Endothelial cell of umbilical vein (primary cell): ENCODE measurements at regions of chr12 and their contacts with region 1.

Region 1: DNA sequence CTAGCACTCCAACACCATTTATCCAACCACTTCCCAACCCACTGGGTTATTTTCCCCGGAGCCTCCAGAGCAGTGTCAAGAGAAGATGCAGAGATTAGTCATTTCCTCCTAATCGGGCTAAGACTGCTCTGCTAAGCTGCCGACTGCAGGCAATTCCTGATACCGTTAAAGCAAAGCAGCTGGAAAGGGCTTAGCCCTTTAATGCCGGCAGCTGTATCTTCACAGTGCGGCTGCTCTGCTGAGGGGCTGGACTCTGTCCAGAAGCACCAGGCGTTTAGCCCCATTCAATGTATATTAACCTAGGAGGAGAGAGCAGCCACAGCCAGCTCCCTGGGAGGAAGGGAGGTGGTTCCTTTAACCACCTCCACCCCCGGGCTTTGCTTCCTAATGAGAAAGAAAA is 11.1 kb downstream of the AQP6 start:
- DNase-seq: peak; percentile 87
- H3K4me3 ChIP-seq: no peak overlapping the region
- H3K27ac ChIP-seq: peak overlapping the region; percentile 24
- H3K4me1 ChIP-seq: peaks cover 14% of the 10 kb centered on the region
- H3K27me3 ChIP-seq: no peaks in the 10 kb centered on the region
- CTCF ChIP-seq: no peak
- POLR2A ChIP-seq: no peak

Region 2: DNA sequence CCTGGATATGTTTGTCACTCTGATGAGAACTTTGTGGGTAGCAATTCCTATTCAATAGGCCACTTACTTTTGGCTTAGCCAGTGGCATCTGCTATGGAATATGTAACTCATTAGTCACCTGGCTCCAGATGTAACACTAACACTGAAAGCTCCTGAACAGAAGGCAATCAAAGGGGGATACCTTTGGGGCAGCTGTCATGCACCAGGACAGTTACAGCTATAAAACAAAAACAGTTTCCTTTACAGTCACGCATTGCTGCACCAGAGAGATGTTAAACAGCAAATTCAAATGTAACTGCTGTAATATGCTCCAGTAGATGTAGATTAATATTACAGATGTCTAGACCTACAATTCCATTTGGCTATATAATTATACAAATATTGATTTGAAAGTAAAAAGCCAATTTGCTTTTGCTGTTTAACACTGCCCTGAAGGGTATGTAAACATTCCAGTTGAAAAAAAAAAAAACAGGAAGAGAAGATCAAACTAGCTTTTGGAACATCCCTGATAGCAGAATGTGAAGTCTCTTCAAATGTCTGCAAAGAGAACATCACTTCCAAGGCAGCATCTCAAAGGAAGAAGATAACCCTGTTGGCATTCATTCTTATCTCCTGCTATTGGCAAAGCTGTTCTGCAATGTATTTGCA is 23.0 kb after region 1 on chr12:
- CTCF ChIA-PET with region 1: interaction called, 12 read pairs
- POLR2A ChIA-PET with region 1: interaction called, 4 read pairs
- dilution Hi-C with region 1: no loop called
- intact Hi-C with region 1: no loop called
- DNase-seq: no peak
- H3K4me3 ChIP-seq: no peak overlapping the region
- H3K27ac ChIP-seq: no peak overlapping the region
- H3K4me1 ChIP-seq: peaks cover 3% of the 10 kb centered on the region
- H3K27me3 ChIP-seq: no peaks in the 10 kb centered on the region
- CTCF ChIP-seq: no peak
- POLR2A ChIP-seq: no peak

Region 3: DNA sequence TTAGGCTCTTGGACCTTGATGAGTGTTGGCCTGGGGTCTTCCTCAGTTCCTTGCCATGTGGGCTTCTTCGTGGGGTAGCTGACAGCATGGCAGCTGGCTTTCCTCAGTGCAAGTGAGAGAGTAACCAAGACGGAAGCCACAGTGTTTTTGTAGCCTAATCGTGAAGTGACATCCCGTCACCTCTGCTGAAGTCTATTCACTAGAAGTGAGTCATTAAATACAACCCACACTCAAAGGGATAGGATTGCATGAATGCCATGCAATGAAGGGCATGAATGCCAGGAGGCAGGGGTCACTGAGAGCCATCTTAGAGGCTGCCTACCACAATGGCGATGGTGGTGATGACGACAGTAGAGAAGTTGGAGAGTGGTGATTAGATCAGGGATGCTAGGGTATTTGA is 60.0 kb after region 1 on chr12:
- CTCF ChIA-PET with region 1: interaction called, 55 read pairs
- POLR2A ChIA-PET with region 1: no interaction called
- dilution Hi-C with region 1: no loop called
- intact Hi-C with region 1: no loop called
- DNase-seq: no peak
- H3K4me3 ChIP-seq: no peak overlapping the region
- H3K27ac ChIP-seq: no peak overlapping the region
- H3K4me1 ChIP-seq: no peaks in the 10 kb centered on the region
- H3K27me3 ChIP-seq: peaks cover 7 to 10% of the 10 kb centered on the region in 2 experiments
- CTCF ChIP-seq: no peak
- POLR2A ChIP-seq: no peak